Head of caudate nucleus (tissue), 42 donors: ENCODE measurements at regions of chr16 and their contacts with region 1.

Region 1: DNA sequence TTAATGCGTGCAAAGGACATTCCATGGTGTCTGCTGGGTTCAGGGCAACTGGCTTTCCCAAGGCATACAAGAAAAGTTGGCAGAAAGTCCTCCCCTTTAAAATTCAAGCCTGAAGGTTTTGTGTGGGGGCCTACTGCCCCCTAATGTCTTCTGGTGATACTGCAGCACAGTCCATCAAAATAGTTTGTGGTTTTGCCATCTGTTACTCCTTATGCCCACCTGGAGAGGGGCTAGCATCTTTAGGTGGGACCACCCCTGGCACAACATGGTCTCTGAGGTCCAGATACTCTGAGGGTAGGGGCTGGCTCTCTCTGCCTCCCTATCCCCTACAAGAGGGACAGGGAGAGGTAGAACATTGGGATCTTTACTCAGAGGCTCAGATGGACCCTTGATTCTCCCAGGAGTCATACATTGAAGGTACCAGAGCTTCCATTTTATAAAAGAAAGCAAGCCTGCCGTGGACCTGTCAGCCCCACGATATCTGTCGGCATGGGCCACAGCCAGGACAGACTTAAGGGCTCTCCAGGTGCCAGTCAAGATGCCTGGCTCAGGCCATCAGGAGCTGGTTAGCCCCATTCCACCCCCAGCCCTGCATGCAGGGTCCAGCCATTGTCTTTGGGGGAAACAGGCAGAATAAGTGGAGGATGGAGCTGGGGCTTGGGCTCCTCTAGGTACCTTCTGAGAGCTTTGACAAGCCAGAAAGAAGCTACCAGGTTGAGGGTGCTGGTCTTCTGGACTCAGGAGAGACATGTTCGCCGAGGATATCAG is 6.3 kb downstream of the ESRP2 start:
- DNase-seq: peak in 26 of 42 donors; percentile 26 to 82 (median 54)

Region 2: GRCh38 chr16:68093816-68094613 is 135.6 kb before region 1 on chr16:
- intact Hi-C with region 1: loop called (anchors 5 kb)
- DNase-seq: peak in 1 of 42 donors; percentile 33